H1 (cell line): ENCODE measurements at regions of chr20 and their contacts with region 1.

Region 1: DNA sequence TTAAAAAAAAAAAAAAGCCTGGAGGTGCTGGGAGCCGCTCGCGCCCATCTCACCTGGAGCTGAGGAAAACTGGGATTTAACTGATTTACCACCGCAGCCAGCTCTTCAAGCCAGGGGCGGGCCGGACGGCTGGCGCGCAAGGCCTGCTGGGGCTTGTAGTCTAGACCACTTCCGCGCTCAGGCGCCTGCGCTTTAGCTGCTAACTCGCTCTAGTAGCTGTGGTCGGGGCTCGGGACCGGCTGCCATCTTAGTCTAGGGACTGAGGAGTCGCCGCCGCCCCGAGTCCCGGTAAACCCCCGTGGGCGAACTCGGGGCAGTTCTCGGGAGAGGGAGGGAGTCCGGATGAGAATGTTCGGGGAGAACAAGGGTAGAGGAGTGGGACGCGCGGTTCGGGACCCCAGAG is at the start of gene ITCH:
- DNase-seq: peak; percentile 93 to 94
- H3K4me3 ChIP-seq: peak within 1 kb of the TSS; percentile 78 to 91 (median 84)
- H3K27ac ChIP-seq: peak within 1 kb of the TSS; percentile 76
- H3K4me1 ChIP-seq: peaks cover 3 to 7% (median 5%) of the 10 kb centered on the region in 4 experiments; a peak in 4 of 7 replicates
- H3K27me3 ChIP-seq: no peaks in the 10 kb centered on the region
- CTCF ChIP-seq: no peak
- EP300 ChIP-seq: no peak
- POLR2A ChIP-seq: peak; percentile 77 to 88
- RAD21 ChIP-seq: no peak
- total RNA-seq, gene ITCH: 39.2 and 45.2 TPM in 2 replicates

Region 2: GRCh38 chr20:34302723-34303528 is 60.1 kb before region 1 on chr20 and contains the start of gene AHCY:
- CTCF ChIA-PET with region 1: no interaction called
- POLR2A ChIA-PET with region 1: interaction called, 24 read pairs
- DNase-seq: peak; percentile 94 to 97
- H3K4me3 ChIP-seq: peak within 1 kb of the TSS; percentile 69 to 94 (median 86)
- H3K27ac ChIP-seq: peak within 1 kb of the TSS; percentile 92
- H3K4me1 ChIP-seq: peaks cover 3 to 9% (median 7%) of the 10 kb centered on the region in 4 experiments; a peak in 6 of 7 replicates
- H3K27me3 ChIP-seq: no peaks in the 10 kb centered on the region
- CTCF ChIP-seq: no peak
- EP300 ChIP-seq: no peak
- POLR2A ChIP-seq: peak; percentile 84 to 98
- RAD21 ChIP-seq: no peak
- total RNA-seq, gene AHCY: 404 and 414 TPM in 2 replicates

Region 3: DNA sequence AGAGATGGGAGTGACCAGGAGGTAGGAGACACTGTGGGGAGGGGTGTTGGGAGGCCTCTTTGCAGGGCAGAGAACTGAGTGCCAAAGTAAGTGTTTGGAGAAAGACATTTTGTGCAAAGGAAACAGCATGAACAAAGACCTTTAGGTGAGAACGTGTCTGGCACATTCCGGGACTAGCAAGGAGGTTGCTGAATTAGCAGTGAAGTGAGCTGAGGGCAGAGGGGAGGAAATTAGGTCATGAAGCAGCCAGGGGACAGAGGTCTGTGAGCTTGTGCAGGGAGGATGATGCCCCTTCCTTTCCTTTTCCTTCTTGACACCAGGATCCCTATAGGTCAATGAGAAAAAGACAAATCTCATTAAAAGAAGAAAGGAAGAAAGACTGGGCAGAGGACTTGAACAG is 38.5 kb before region 1 on chr20:
- CTCF ChIA-PET with region 1: interaction called, 3 read pairs
- POLR2A ChIA-PET with region 1: interaction called, 14 read pairs
- DNase-seq: no peak
- H3K4me3 ChIP-seq: no peak overlapping the region
- H3K27ac ChIP-seq: no peak overlapping the region
- H3K4me1 ChIP-seq: peaks cover 0 to 7% (median 0%) of the 10 kb centered on the region in 4 experiments; a peak in 2 of 7 replicates
- H3K27me3 ChIP-seq: no peaks in the 10 kb centered on the region
- CTCF ChIP-seq: no peak
- EP300 ChIP-seq: no peak
- POLR2A ChIP-seq: no peak
- RAD21 ChIP-seq: no peak